GM12878 (cell line): ENCODE measurements at regions of chr14 and their contacts with region 1.

Region 1: GRCh38 chr14:77067632-77068514 is 30.2 kb upstream of the CIPC start:
- DNase-seq: no peak
- ATAC-seq: peak; percentile 85
- H3K4me3 ChIP-seq: no peak overlapping the region
- H3K27ac ChIP-seq: no peak overlapping the region
- H3K4me1 ChIP-seq: peaks cover 14% of the 10 kb centered on the region
- H3K27me3 ChIP-seq: peaks cover 0 to 10% of the 10 kb centered on the region in 2 experiments; a peak in 2 of 4 replicates
- CTCF ChIP-seq: peak; percentile 89 to 96 (median 96); a peak in 5 of 6 replicates
- EP300 ChIP-seq: no peak
- POLR2A ChIP-seq: no peak
- RAD21 ChIP-seq: peak; percentile 88

Region 2: GRCh38 chr14:76882651-76883050 is 185.2 kb before region 1 on chr14:
- CTCF ChIA-PET with region 1: interaction called, 848 read pairs
- POLR2A ChIA-PET with region 1: no interaction called
- RAD21 ChIA-PET with region 1: interaction called, 498 read pairs
- SMC1A ChIA-PET with region 1: interaction called, 370 read pairs
- in situ Hi-C with region 1: loop called (anchors 10 kb)
- intact Hi-C with region 1: no loop called
- DNase-seq: no peak
- ATAC-seq: no peak
- H3K4me3 ChIP-seq: no peak overlapping the region
- H3K27ac ChIP-seq: no peak overlapping the region
- H3K4me1 ChIP-seq: no peaks in the 10 kb centered on the region
- H3K27me3 ChIP-seq: peaks cover 2 to 3% of the 10 kb centered on the region in 2 experiments; a peak in 2 of 4 replicates
- CTCF ChIP-seq: no peak
- EP300 ChIP-seq: no peak
- POLR2A ChIP-seq: no peak
- RAD21 ChIP-seq: no peak

Region 3: DNA sequence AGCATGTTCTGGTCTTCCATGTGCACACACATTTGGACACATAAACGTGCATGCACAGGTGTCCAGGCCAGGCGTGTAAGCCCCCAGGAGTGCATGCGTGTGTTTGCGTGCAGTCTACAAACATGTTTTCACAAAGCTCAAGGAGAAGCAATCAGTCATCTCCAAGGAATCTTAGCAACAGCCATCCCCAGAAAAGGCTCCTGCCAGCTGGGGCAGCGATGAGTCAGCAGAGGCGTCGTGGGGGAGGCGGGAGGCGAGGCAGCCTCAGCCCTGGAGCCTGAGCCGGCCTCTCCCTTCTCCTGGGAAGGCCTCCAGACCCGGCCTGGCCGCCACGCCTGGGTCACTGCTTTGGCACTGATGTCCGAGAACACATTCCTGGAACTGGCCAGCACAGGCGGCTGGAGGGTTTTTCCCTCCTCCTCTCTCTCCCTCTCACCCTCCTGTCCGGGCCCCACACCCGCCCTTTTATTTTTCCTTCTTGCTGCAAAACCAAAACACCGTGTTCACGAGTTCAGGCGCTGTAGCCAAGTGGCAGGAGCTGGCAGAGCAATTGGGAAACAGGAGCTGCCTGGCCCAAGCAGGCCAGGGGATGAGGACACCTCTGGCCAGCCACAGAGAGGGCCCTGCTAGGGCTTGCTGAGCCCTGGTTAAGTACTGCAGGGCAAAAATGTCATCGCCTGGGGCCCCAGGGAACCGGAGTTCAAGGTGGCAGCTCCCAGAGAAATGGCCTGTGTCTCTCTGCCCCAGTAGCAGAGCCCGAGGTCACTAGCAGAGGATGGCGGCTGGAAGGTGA is 148.9 kb before region 1 on chr14:
- CTCF ChIA-PET with region 1: interaction called, 171 read pairs
- POLR2A ChIA-PET with region 1: interaction called, 5 read pairs
- RAD21 ChIA-PET with region 1: interaction called, 166 read pairs
- SMC1A ChIA-PET with region 1: interaction called, 164 read pairs
- in situ Hi-C with region 1: loop called (anchors 10 kb)
- intact Hi-C with region 1: no loop called
- DNase-seq: no peak
- ATAC-seq: peak; percentile 11
- H3K4me3 ChIP-seq: no peak overlapping the region
- H3K27ac ChIP-seq: no peak overlapping the region
- H3K4me1 ChIP-seq: peaks cover 5% of the 10 kb centered on the region
- H3K27me3 ChIP-seq: no peaks in the 10 kb centered on the region
- CTCF ChIP-seq: 0 out of 6 replicates have a peak, but pooled peaks of 1 of the 3 experiments have one; percentile 8
- EP300 ChIP-seq: no peak
- POLR2A ChIP-seq: no peak
- RAD21 ChIP-seq: peak; percentile 36; the same call in 1 of the 2 replicates

Region 4: DNA sequence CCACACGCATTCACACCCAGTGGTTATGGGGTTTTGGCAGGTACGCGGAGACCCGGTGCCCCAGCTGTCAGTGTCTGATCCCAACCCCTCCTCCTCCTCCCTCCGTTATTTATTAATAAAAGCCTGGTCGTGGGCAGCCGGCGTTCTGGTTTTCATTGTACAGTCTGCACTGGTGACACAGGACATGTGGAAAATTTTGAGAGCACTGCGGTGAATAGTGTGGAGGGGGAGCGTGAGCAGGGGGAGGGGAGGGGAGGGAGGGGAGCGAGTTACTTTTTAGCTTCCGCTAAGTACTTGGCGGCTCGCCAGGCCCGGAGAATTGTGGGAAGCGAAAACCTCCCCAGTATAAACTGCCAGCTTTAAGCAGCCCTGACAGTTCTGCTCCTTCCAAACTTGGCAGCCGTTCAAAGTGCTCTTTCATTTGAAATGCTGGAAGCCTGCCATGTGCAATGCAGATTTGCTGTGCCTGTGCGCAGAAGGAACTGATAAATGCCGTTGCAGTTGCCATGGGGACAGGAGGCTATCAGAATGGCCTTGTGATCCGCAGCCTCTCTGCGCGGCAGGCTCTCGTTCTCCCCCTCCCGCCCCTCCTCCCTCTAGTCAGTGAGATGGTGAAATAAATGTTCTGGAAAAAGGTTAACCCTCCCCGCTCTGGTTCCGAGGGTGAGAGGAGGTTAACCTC is 27.7 kb before region 1 on chr14:
- CTCF ChIA-PET with region 1: interaction called, 12 read pairs
- POLR2A ChIA-PET with region 1: interaction called, 5 read pairs
- RAD21 ChIA-PET with region 1: interaction called, 5 read pairs
- SMC1A ChIA-PET with region 1: interaction called, 6 read pairs
- in situ Hi-C with region 1: no loop called
- intact Hi-C with region 1: no loop called
- DNase-seq: peak; percentile 99
- ATAC-seq: peak; percentile 75
- H3K4me3 ChIP-seq: peak overlapping the region; percentile 50
- H3K27ac ChIP-seq: peak overlapping the region; percentile 93
- H3K4me1 ChIP-seq: peaks cover 87% of the 10 kb centered on the region
- H3K27me3 ChIP-seq: no peaks in the 10 kb centered on the region
- CTCF ChIP-seq: no peak
- EP300 ChIP-seq: peak; percentile 42 to 61
- POLR2A ChIP-seq: peak; percentile 55; the same call in 1 of the 2 replicates
- RAD21 ChIP-seq: no peak

Region 5: DNA sequence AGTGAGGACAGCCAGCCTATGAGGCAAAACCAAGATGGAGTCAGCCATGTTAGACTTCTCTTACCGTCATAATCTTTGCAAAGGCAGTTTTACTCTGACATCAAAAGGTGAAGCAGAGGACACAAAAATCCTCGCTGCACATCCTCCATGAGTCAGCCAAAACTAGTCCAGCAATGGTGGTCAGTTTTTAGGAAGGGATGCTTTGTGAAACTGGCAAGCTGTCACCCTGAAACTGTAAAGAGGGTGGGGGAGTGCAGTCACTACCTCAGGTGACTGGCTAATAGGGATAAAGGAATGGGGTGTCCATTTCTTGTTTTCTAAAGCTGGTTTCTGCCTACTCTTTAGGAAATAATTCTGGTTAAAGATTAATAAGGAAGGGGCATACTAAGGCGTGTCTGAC is 24.8 kb after region 1 on chr14:
- CTCF ChIA-PET with region 1: interaction called, 719 read pairs
- POLR2A ChIA-PET with region 1: interaction called, 4 read pairs
- RAD21 ChIA-PET with region 1: interaction called, 199 read pairs
- SMC1A ChIA-PET with region 1: interaction called, 185 read pairs
- in situ Hi-C with region 1: no loop called
- intact Hi-C with region 1: loop called (anchors 1 kb)
- DNase-seq: no peak
- ATAC-seq: peak; percentile 51
- H3K4me3 ChIP-seq: no peak overlapping the region
- H3K27ac ChIP-seq: no peak overlapping the region
- H3K4me1 ChIP-seq: peaks cover 5% of the 10 kb centered on the region; the same call in 1 of the 2 replicates
- H3K27me3 ChIP-seq: no peaks in the 10 kb centered on the region; a peak in 1 of 4 replicates
- CTCF ChIP-seq: no peak
- EP300 ChIP-seq: no peak
- POLR2A ChIP-seq: no peak
- RAD21 ChIP-seq: no peak

Region 6: GRCh38 chr14:77151918-77152588 is 84.2 kb after region 1 on chr14:
- CTCF ChIA-PET with region 1: interaction called, 4 read pairs
- POLR2A ChIA-PET with region 1: no interaction called
- RAD21 ChIA-PET with region 1: interaction called, 10 read pairs
- SMC1A ChIA-PET with region 1: interaction called, 3 read pairs
- in situ Hi-C with region 1: no loop called
- intact Hi-C with region 1: no loop called
- DNase-seq: no peak
- ATAC-seq: peak; percentile 91
- H3K4me3 ChIP-seq: no peak overlapping the region
- H3K27ac ChIP-seq: no peak overlapping the region
- H3K4me1 ChIP-seq: no peaks in the 10 kb centered on the region
- H3K27me3 ChIP-seq: peaks cover 0 to 2% of the 10 kb centered on the region in 2 experiments; a peak in 2 of 4 replicates
- CTCF ChIP-seq: peak in 2 of 3 experiments; percentile 7 to 41; a peak in 3 of 6 replicates
- EP300 ChIP-seq: no peak
- POLR2A ChIP-seq: no peak
- RAD21 ChIP-seq: peak; percentile 58